Esophagus muscularis mucosa (tissue), 4 donors: ENCODE measurements at regions of chr11 and their contacts with region 1.

Region 1: GRCh38 chr11:128884703-128885338 is 6.3 kb upstream of the KCNJ5 start:
- DNase-seq: no peak
- H3K4me3 ChIP-seq: no peak overlapping the region
- H3K27ac ChIP-seq: no peak overlapping the region
- H3K4me1 ChIP-seq: peaks cover 0 to under 1% (median 0%) of the 10 kb centered on the region in 4 donors
- H3K27me3 ChIP-seq: peaks cover 0 to 48% (median 2%) of the 10 kb centered on the region in 4 donors
- CTCF ChIP-seq: peak; percentile 86 to 87 (median 86)
- EP300 ChIP-seq: no peak
- POLR2A ChIP-seq: no peak

Region 2: DNA sequence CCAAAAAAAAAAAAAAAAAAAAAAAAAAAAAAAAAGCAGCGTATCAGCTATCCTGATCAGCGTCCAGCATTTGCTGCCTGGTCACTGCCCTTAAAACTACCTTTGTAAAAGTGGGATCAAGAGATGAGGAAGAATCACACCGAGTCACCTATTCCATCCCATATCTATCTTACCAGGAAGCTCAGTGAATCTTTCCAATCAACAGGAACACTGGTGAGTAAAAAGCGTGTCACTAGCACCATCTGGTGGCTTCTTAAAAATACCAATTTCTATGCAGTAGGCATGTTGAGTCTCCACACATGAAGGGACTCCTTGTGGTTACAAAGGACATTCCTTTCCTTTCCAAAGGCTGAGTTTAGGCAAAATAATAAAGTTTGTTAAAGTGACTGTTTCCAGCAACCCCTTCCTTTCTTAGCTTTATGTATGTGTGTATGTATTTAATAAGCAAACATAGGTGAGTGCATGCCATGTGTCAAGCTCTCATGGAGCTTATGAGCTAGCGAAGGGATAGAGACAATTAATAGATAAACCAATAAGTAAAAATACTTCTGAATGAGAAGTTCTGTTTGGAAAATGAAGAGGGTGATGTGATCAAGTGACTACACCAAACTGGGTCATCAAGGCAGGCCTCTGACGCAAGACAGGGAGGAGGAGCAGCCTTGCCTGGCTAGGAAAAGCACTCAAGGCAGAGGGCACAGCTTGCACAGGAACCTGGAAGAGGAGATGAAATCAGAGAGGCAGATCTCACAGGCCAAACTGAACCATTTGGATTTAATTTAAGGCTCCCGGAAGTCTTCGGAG is 71.8 kb after region 1 on chr11:
- intact Hi-C with region 1: loop called (anchors 2 kb)
- DNase-seq: no peak
- H3K4me3 ChIP-seq: no peak overlapping the region
- H3K27ac ChIP-seq: no peak overlapping the region
- H3K4me1 ChIP-seq: no peaks in the 10 kb centered on the region
- H3K27me3 ChIP-seq: peaks cover 0 to 11% (median 0%) of the 10 kb centered on the region in 4 donors
- CTCF ChIP-seq: peak; percentile 54 to 66 (median 58)
- EP300 ChIP-seq: no peak
- POLR2A ChIP-seq: no peak